ENCODE measurements at regions of chr1 and their contacts with region 1.

Region 1: DNA sequence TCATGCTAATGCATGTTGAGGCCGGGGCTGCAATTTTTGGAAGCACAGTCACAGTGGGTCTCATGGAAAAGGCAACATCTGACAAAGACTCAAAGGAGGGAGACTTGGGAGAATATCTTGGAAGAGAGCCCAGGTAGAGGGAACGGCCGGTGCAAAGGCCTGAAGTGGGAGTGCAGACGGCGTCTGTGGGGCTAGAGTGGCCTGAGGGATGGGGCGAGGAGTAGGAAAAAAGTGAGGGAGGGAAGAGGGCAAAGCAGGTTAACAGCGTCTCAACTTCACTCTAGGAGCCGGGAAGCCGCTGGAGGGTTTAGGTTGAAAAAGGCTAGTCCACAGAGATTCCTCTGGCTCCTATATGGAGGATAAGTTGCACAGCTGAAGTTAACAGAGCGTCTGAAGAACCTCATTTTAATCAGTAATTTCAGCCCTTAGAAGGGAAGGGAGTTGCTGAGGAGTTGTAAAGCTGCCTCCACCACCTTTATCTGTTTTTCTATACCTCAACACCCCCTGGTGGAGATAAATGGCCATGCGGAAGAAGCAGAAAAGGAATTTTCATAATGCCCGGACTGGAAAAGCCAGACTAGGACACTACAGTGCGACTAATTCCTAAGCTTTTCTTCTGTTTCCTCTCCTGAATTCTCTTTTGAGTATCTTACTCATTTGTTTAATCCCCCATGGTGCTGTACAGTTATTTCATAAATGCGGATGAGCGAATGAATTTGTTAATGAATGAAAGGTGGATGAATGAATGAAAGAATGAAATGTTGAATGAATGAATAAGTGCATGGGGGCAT is 78.7 kb upstream of the ZNF281 start:
- DNase-seq: peak; percentile 85
- H3K4me3 Mint-ChIP-seq: no peak overlapping the region
- H3K27ac Mint-ChIP-seq: no peak overlapping the region
- H3K4me1 Mint-ChIP-seq: peaks cover 15% of the 10 kb centered on the region
- H3K27me3 Mint-ChIP-seq: peaks cover 31% of the 10 kb centered on the region

Region 2: DNA sequence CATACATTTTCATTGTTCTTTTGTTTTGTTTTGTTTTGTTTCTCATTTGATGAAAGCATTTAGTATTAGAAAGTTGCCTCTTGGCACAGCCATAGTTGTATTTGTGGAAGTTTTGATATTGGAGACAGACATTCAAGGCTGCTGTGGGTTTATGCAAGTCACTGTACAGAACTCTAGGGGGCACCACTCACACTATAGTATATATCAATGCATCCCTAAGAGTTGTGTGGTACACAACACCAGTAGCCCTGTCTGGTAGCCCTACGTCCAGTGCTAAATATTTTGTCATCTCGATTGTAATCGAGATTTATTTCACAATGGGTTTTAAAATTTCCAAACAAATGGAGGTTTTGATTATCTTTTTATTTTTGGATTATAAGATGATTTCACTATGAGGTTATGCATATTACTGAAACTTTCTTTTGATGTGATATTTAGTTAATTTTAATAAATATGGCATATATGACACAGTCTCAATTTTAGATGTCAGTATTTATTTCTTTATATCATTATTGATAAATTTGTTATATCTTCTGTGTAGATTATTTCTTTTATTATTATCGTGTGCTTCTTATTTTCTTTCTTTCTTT is 348.8 kb before region 1 on chr1:
- intact Hi-C with region 1: loop called (anchors 1 kb)
- DNase-seq: peak; percentile 79
- H3K4me3 Mint-ChIP-seq: no peak overlapping the region
- H3K27ac Mint-ChIP-seq: no peak overlapping the region
- H3K4me1 Mint-ChIP-seq: peaks cover 5% of the 10 kb centered on the region
- H3K27me3 Mint-ChIP-seq: peaks cover 9% of the 10 kb centered on the region

Region 3: DNA sequence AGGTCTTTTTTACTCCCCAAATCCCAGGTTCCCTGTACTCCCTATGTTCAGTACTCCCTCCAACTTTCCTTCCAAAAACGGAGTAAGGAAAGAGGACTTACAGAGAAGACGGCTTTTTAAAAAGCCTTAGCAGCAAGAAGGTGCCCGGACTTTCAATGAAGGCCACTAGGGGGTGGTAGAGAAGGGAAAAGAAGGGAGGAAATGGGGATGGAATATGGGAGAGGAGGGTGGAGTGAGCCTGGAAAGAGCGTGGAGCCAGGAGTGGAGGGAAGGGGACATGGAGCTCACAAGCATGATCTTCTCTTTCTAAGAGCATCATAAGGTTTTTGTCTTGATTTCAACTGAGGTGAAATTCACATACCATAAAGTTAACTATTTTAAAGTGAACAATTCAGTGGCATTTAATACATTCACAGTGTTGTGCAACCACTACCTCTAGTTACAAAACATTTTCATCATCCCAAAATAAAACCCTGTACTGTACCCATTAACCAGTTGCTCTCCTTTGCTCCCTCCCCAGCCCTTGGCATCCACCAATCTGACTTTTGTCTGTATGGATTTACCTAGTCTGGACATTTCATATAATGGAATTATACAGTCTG is 208.7 kb before region 1 on chr1:
- intact Hi-C with region 1: loop called (anchors 1 kb)
- DNase-seq: peak; percentile 79
- H3K4me3 Mint-ChIP-seq: no peak overlapping the region
- H3K27ac Mint-ChIP-seq: no peak overlapping the region
- H3K4me1 Mint-ChIP-seq: no peaks in the 10 kb centered on the region
- H3K27me3 Mint-ChIP-seq: peaks cover 14% of the 10 kb centered on the region

Region 4: GRCh38 chr1:200409761-200410565 is 78.6 kb before region 1 on chr1 and contains the start of gene ZNF281:
- intact Hi-C with region 1: loop called (anchors 2 kb)
- DNase-seq: peak; percentile 98
- H3K4me3 Mint-ChIP-seq: peak within 1 kb of the TSS; percentile 90
- H3K27ac Mint-ChIP-seq: peak within 1 kb of the TSS; percentile 95
- H3K4me1 Mint-ChIP-seq: peaks cover 50% of the 10 kb centered on the region
- H3K27me3 Mint-ChIP-seq: peaks cover 8% of the 10 kb centered on the region
- total RNA-seq, gene ZNF281: 19.0 and 20.4 TPM in 2 replicates

Region 5: DNA sequence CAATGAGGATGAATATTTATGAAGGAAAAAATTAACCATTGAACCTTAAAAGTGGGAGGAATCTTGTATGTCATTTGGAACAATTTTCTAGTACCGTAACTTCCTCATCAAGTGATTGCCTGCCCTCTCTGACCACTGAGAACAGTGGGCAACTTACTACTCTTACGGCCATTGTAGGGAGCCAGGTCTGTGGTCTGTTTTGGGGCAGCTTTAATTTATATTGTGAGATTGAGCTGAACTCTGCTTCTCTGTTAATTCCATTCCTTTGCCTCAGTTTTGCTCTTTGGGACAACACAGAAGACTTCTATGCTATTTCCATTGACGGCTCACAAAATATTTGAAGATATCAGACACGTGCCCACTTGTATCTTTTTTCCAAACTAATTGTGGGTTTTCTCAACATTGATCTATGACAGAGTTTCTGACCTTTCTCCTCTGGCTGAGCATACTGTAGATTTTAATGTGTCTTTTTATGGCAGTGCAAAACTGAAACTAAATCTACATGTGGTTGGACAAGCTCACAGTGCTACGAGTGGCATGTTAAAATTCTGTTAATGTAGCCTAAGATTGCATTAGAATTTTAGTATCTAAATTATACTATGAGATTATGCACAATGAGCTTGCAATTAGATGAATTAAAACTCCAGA is 50.9 kb before region 1 on chr1:
- intact Hi-C with region 1: no loop called
- DNase-seq: peak; percentile 59
- H3K4me3 Mint-ChIP-seq: peak overlapping the region; percentile 73
- H3K27ac Mint-ChIP-seq: peak overlapping the region; percentile 84
- H3K4me1 Mint-ChIP-seq: peaks cover 9% of the 10 kb centered on the region
- H3K27me3 Mint-ChIP-seq: no peaks in the 10 kb centered on the region

Region 6: DNA sequence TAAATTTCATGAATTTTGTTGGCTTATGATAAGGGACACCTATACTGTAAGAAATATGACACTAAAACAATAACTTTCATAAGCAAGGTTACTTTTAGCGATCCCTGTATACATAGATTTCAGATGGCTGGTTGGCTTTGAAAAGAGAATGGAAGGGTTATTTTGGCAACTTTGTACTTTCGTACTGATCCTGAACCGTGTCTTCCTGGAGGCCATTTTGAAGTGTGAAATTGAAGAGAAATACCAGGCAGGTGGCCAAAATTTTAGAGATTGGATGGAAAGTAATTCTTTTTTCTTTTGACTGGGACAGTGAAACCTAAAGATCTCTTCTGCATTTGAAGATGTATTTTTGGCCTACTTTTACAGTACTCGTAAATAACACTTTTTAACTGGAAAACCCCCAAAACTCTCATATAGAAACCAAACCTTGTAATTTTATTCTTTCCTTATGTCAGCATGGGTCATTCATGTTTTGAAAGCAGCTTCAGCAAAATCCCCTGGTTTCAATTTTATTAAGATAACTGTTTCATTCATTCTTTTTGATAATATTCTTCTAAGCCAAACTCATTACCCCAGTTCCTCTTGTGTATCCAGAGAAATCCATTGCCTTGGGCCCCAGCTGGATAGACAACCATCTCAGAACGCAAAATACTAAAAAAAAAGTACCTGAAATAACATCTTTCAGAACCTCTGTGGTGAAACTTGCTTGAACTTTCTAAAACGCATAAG is 40.4 kb before region 1 on chr1:
- intact Hi-C with region 1: loop called (anchors 1 kb)
- DNase-seq: no peak
- H3K4me3 Mint-ChIP-seq: peak overlapping the region; percentile 33
- H3K27ac Mint-ChIP-seq: peak overlapping the region; percentile 95
- H3K4me1 Mint-ChIP-seq: peaks cover 38% of the 10 kb centered on the region
- H3K27me3 Mint-ChIP-seq: no peaks in the 10 kb centered on the region

Measured in activated CD4-positive, alpha-beta T cell treated with anti-CD3 and anti-CD28 coated beads, Interleukin-2, amount 10 ng/mL, durations not matched to agents 24 days and 14 days (primary cell).